Head of caudate nucleus (tissue), 42 donors: ENCODE measurements at regions of chr7 and their contacts with region 1.

Region 1: GRCh38 chr7:56051339-56052191 is at the starts of genes CCT6A and PSPH:
- DNase-seq: peak; percentile 95 to 99 (median 99)

Region 2: DNA sequence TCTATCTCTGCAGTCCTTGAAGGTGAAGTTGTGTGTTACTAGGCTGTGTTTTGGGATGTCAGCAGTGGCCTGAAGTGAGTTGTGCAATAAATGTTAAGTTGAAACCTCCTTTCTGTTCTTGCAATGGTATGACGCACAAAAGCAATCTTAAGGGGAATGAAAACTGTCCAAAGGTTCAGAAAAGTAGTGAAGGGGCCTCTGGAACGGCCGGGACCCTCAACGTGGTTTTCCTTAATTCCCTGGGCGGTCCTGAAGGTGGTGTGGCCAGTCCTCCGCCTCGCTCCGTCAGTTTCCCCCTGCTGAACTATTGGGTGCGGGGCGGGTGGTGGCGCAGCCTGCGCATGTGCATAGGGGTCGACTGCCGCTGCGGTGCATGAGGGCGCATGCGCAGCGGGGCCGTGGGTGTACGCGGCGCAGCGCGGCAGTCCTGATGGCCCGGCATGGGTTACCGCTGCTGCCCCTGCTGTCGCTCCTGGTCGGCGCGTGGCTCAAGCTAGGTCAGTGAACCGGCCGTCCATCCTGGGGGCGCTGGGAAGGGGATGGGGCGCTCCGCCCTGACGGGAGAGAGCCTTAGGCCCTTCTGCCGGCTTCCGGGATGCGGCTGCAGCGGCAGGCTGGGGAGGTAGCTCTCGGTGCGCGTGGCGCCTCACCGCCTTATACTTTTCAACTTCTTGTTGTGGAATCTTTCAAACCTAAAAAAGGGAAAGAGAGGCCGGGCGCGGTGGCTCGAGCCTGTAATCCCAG is 12.5 kb after region 1 on chr7 and contains the start of gene SUMF2:
- intact Hi-C with region 1: loop called (anchors 2 kb)
- DNase-seq: peak; percentile 75 to 96 (median 92)

Region 3: GRCh38 chr7:56115852-56116538 is 64.4 kb after region 1 on chr7 and contains the start of gene NUPR2:
- intact Hi-C with region 1: no loop called
- DNase-seq: peak in 9 of 42 donors; percentile 15 to 40 (median 24)